ENCODE measurements at regions of chr12 and their contacts with region 1.

Region 1: DNA sequence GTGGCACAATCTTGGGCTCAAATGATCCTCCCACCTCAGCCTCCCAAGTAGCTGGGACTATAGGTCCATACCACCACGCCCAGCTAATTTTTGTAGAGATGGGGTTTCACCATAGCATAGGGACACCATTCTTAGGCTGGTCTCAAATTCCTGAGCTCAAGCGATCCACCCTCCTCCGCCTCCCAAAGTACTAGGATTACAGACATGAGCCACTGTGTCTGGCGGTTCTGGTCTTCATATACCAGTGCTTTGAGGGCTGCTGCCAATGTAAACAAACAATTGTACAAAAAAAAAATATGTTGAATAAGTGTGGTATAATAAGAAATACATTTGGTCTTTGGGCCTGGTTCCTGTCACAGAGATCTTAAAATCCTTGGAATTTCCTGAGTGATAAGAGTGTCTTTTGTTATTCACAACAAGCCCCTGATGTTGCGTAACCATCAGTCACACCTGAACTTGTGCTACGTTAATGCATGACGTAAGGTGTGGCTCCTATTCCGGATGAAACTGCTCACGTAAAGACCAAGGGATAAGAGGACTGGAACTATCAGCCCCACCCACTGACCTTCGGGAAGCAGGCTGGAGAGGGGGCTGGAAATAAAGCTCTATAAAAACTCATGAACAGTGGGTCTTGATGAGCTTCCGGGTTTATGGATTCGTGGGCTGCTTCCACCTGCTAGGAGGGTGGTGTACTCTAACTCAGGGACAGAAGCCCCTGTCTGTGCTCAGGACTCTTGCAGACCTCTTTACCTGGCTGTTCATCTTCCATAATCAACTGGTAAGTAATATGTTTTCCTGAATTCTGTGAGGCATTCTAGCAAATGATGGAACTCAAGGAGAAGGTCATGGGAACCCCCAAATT is 16.5 kb upstream of the RIMKLB start:
- DNase-seq: no peak
- ATAC-seq: no peak
- H3K4me3 ChIP-seq: no peak overlapping the region
- H3K4me3 Mint-ChIP-seq: no peak overlapping the region
- H3K27ac ChIP-seq: no peak overlapping the region
- H3K27ac Mint-ChIP-seq: no peak overlapping the region
- H3K4me1 ChIP-seq: no peaks in the 10 kb centered on the region
- H3K4me1 Mint-ChIP-seq: peaks cover 0 to 5% (median 0%) of the 10 kb centered on the region in 7 donors
- H3K27me3 ChIP-seq: no peaks in the 10 kb centered on the region
- H3K27me3 Mint-ChIP-seq: peaks cover 0 to 14% (median 0%) of the 10 kb centered on the region in 5 donors

Region 2: GRCh38 chr12:8662593-8662992 is 18.7 kb before region 1 on chr12 and contains the start of gene MFAP5:
- CTCF ChIA-PET with region 1: no interaction called
- POLR2A ChIA-PET with region 1: no interaction called
- intact Hi-C with region 1: no loop called
- DNase-seq: no peak
- ATAC-seq: no peak
- H3K4me3 ChIP-seq: no peak within 1 kb of the TSS
- H3K4me3 Mint-ChIP-seq: no peak within 1 kb of the TSS
- H3K27ac ChIP-seq: no peak within 1 kb of the TSS
- H3K27ac Mint-ChIP-seq: no peak within 1 kb of the TSS
- H3K4me1 ChIP-seq: no peaks in the 10 kb centered on the region
- H3K4me1 Mint-ChIP-seq: peaks cover 0 to under 1% (median 0%) of the 10 kb centered on the region in 7 donors
- H3K27me3 ChIP-seq: no peaks in the 10 kb centered on the region
- H3K27me3 Mint-ChIP-seq: peaks cover 5 to 16% (median 8%) of the 10 kb centered on the region in 5 donors
- total RNA-seq, gene MFAP5: not detected

Region 3: GRCh38 chr12:8823565-8824300 is 142.5 kb after region 1 on chr12:
- CTCF ChIA-PET with region 1: no interaction called
- POLR2A ChIA-PET with region 1: no interaction called
- intact Hi-C with region 1: loop called in 1 of 2 experiments (anchors 1 kb)
- DNase-seq: peak in 4 of 9 donors; percentile 3 to 8 (median 4)
- ATAC-seq: no peak
- H3K4me3 ChIP-seq: no peak overlapping the region
- H3K4me3 Mint-ChIP-seq: no peak overlapping the region
- H3K27ac ChIP-seq: no peak overlapping the region
- H3K27ac Mint-ChIP-seq: no peak overlapping the region
- H3K4me1 ChIP-seq: no peaks in the 10 kb centered on the region
- H3K4me1 Mint-ChIP-seq: no peaks in the 10 kb centered on the region
- H3K27me3 ChIP-seq: no peaks in the 10 kb centered on the region
- H3K27me3 Mint-ChIP-seq: peaks cover under 1 to 12% (median 7%) of the 10 kb centered on the region in 5 donors

Region 4: DNA sequence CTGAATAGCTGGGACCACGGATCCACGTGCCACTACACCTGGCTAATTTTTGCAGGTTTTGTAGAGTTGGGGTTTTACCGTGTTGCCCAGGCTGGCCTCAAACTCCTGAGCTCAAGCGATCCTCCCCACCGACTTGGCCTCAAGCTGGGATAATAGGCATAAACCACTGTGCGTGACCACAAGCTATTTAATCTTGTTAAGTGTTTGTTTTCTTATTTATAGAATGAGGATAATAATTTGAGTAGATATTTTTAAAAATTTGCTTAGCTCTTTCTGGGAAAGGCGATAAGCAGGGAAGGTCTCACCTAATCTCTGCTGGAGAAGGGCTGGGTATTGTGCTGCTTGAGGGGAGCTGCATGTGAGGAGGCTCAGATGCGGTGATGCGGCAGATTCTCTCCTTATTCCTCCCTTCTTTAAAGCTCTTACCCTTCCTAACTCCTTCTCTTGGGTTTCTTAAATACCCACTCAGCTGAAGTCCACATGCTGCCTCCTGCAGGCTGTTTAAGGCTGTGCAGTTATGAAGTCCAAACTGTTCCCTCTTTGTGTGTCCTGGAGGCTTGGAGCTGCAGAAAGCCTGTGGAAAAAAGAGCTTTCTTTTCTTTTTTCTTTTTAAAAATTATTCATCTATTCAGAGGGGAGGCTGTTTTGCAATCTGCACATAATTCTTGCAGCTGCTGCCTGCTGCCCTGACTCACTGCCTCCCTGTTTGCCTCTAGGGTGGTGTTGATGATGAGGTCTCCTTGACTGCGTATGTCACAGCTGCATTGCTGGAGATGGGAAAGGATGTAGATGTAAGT is 179.1 kb after region 1 on chr12:
- CTCF ChIA-PET with region 1: interaction called, 13 read pairs
- POLR2A ChIA-PET with region 1: no interaction called
- intact Hi-C with region 1: loop called (anchors 1 kb)
- DNase-seq: peak in 6 of 9 donors; percentile 13 to 32 (median 13)
- ATAC-seq: peak; percentile 57
- H3K4me3 ChIP-seq: no peak overlapping the region
- H3K4me3 Mint-ChIP-seq: no peak overlapping the region
- H3K27ac ChIP-seq: no peak overlapping the region
- H3K27ac Mint-ChIP-seq: no peak overlapping the region
- H3K4me1 ChIP-seq: no peaks in the 10 kb centered on the region
- H3K4me1 Mint-ChIP-seq: no peaks in the 10 kb centered on the region
- H3K27me3 ChIP-seq: no peaks in the 10 kb centered on the region
- H3K27me3 Mint-ChIP-seq: peaks cover 0 to 2% (median 0%) of the 10 kb centered on the region in 5 donors

Region 5: DNA sequence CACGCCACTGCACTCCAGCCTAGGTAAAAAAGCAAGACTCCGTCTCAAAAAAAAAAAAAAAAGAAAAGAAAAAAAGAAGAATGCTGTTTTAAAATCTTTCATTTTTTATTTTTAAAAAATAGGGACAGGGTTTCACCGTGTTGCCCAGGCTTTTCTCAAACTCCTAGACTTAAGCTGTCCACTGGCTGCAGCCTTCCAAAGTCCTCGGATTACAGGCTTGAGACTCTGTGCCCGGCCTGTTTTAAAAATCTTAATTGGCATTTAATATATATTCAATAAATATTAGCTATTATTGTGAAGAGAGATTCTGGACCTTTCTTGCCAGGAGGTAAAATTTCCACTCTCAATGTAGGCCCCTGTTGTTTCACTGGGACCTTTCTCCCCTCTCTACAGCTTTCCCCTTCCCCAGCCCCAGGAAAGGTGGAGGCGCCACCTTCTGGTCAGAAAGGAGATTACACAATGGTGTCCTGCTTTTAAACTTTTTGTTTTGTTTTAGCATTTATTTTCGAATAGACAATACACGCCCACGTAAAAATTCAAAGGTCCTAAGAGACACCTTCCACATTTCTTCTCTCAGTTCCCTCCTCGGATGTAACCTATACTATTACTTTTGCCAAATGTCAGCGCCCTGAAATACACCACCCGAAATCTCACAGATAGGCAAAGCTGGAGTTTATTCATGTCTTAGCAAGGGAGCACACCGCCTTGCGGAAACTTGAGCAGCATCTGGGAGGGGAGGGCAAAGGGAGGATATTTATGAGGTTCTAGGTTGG is 209.2 kb after region 1 on chr12:
- CTCF ChIA-PET with region 1: interaction called, 8 read pairs
- POLR2A ChIA-PET with region 1: no interaction called
- intact Hi-C with region 1: loop called (anchors 1 kb)
- DNase-seq: peak; percentile 29 to 78 (median 61)
- ATAC-seq: peak; percentile 91
- H3K4me3 ChIP-seq: peak overlapping the region; percentile 71
- H3K4me3 Mint-ChIP-seq: peak overlapping the region; percentile 77 to 100 (median 90)
- H3K27ac ChIP-seq: peak overlapping the region; percentile 59
- H3K27ac Mint-ChIP-seq: peak overlapping the region in 8 of 9 donors; percentile 8 to 92 (median 80)
- H3K4me1 ChIP-seq: no peaks in the 10 kb centered on the region
- H3K4me1 Mint-ChIP-seq: peaks cover 0 to 12% (median 5%) of the 10 kb centered on the region in 7 donors
- H3K27me3 ChIP-seq: no peaks in the 10 kb centered on the region
- H3K27me3 Mint-ChIP-seq: peaks cover 0 to 27% (median 0%) of the 10 kb centered on the region in 5 donors

Measured in naive thymus-derived CD4-positive, alpha-beta T cell (primary cell).